ENCODE measurements at regions of chr9 and their contacts with region 1.

Region 1: GRCh38 chr9:90142580-90142979 is 500.0 kb downstream of the DIRAS2 start:
- H3K4me3 ChIP-seq: no peak overlapping the region
- H3K27ac ChIP-seq: no peak overlapping the region
- H3K4me1 ChIP-seq: no peaks in the 10 kb centered on the region
- CTCF ChIP-seq: no peak

Region 2: GRCh38 chr9:89576404-89576839 is 566.2 kb before region 1 on chr9:
- CTCF ChIA-PET with region 1: interaction called, 13 read pairs
- POLR2A ChIA-PET with region 1: no interaction called
- H3K4me3 ChIP-seq: no peak overlapping the region
- H3K27ac ChIP-seq: no peak overlapping the region
- H3K4me1 ChIP-seq: no peaks in the 10 kb centered on the region
- CTCF ChIP-seq: no peak

Region 3: GRCh38 chr9:89879701-89880100 is 262.9 kb before region 1 on chr9:
- CTCF ChIA-PET with region 1: no interaction called
- POLR2A ChIA-PET with region 1: no interaction called
- H3K4me3 ChIP-seq: no peak overlapping the region
- H3K27ac ChIP-seq: no peak overlapping the region
- H3K4me1 ChIP-seq: no peaks in the 10 kb centered on the region
- CTCF ChIP-seq: no peak

Region 4: GRCh38 chr9:90112788-90113187 is 29.8 kb before region 1 on chr9:
- CTCF ChIA-PET with region 1: no interaction called
- POLR2A ChIA-PET with region 1: no interaction called
- H3K4me3 ChIP-seq: no peak overlapping the region
- H3K27ac ChIP-seq: no peak overlapping the region
- H3K4me1 ChIP-seq: no peaks in the 10 kb centered on the region
- CTCF ChIP-seq: no peak

Region 5: GRCh38 chr9:90156315-90156714 is 13.7 kb after region 1 on chr9:
- CTCF ChIA-PET with region 1: interaction called, 20 read pairs
- POLR2A ChIA-PET with region 1: no interaction called
- H3K4me3 ChIP-seq: no peak overlapping the region
- H3K27ac ChIP-seq: no peak overlapping the region
- H3K4me1 ChIP-seq: no peaks in the 10 kb centered on the region
- CTCF ChIP-seq: no peak

Region 6: GRCh38 chr9:90189306-90189705 is 46.7 kb after region 1 on chr9:
- CTCF ChIA-PET with region 1: interaction called, 11 read pairs
- POLR2A ChIA-PET with region 1: no interaction called
- H3K4me3 ChIP-seq: no peak overlapping the region
- H3K27ac ChIP-seq: no peak overlapping the region
- H3K4me1 ChIP-seq: no peaks in the 10 kb centered on the region
- CTCF ChIP-seq: no peak

Region 7: DNA sequence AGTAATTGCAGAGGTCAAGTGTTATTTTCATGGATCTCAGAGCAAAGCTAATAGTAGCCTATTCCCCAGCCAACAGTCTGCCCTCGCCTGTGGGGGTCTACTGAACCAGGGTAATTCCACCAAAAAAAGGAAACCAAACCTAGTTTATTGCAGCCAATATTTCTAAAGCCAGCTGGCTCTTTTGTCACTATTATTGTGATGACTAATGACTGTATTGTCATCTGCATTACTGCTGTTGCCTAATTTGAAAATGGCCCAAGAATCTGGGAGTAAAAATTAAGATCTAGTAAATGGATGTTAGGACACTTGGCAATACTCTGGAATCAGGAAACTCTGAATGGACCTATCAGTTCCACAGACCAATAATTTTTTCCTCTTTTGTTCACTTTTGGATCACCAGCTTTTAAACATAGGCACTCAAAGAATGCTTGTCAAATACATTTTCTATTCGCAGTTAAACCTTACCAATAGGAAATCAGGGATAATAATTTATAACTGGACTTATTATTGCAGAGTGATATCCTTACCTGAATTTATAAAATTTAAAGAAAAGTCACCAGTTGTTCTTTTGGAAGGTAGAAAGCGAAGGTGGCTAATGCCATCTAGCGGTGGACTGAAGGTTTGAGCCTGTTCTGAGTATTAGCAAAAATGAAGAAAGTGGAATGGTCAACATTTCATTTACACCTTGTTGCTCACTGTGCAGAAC is 728.2 kb after region 1 on chr9:
- CTCF ChIA-PET with region 1: interaction called, 10 read pairs
- POLR2A ChIA-PET with region 1: no interaction called
- H3K4me3 ChIP-seq: no peak overlapping the region
- H3K27ac ChIP-seq: no peak overlapping the region
- H3K4me1 ChIP-seq: no peaks in the 10 kb centered on the region
- CTCF ChIP-seq: no peak

Measured in HEK293 (cell line).